ENCODE measurements at regions of chr11 and their contacts with region 1.

Region 1: DNA sequence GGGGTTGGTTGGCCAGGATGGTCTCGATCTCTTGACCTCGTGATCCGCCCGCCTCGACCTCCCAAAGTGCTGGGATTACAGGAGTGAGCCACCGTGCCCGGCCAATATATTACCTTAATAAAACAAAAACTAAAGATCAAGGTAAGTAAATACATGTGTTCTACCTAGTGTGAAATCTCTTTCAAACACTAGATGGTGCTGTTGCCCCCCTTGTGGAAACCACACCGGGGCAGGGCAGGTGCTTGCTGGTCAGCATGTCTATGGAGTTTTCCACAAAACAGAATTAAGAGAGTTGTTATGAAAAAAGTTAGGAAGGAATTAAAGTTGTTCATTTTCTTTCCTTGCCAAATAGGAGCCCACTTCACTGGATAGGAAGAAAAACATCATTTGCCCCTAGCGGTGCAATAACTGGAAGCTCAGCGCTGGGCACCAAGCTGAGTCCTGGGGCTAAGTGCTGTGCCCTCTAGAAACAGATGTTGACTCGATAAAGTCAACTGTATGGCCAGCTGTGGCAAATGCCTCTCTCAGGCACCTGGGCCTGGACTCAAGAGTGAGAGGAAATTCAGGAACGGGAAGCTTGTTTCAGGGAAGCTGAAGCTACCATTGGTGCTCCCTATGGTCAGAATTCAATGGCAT is 6.3 kb upstream of the KCNJ5 start:
- DNase-seq: peak; percentile 56 to 66
- ATAC-seq: peak; percentile 83 to 92
- H3K4me3 ChIP-seq: no peak overlapping the region
- H3K27ac ChIP-seq: no peak overlapping the region
- H3K4me1 ChIP-seq: no peaks in the 10 kb centered on the region
- CTCF ChIP-seq: peak; percentile 65
- EP300 ChIP-seq: no peak
- POLR2A ChIP-seq: no peak
- RAD21 ChIP-seq: peak; percentile 86 to 93

Region 2: DNA sequence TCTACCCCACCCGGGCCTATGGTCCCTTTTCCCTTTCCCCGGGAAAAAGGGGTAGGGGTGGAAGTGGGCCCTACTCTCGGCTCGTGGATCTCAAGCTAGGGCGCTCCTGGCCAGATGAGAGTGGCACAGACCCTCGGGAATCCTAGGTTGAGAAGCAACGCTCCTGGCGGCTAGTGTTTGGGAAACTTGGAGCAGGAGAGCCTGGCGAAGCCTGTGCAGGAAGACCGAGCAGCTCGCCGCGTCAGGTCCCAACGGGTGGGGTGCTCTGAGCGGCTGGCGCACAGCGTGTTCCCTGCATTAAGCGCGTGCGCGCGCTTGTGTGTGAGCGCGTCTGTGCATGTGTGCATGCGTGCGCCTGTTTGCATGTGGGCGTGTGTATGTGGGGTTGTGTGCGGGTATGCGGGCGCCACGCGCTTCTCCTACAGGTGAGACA is 198.1 kb before region 1 on chr11:
- CTCF ChIA-PET with region 1: no interaction called
- POLR2A ChIA-PET with region 1: no interaction called
- DNase-seq: peak in 1 of 2 experiments; percentile 15
- ATAC-seq: peak in 1 of 2 experiments; percentile 63; a peak in 3 of 6 replicates
- H3K4me3 ChIP-seq: no peak overlapping the region
- H3K27ac ChIP-seq: no peak overlapping the region
- H3K4me1 ChIP-seq: no peaks in the 10 kb centered on the region
- CTCF ChIP-seq: no peak
- EP300 ChIP-seq: no peak
- POLR2A ChIP-seq: no peak
- RAD21 ChIP-seq: no peak

Region 3: GRCh38 chr11:128868841-128869580 is 15.8 kb before region 1 on chr11:
- CTCF ChIA-PET with region 1: interaction called, 20 read pairs
- POLR2A ChIA-PET with region 1: no interaction called
- DNase-seq: no peak
- ATAC-seq: no peak
- H3K4me3 ChIP-seq: no peak overlapping the region
- H3K27ac ChIP-seq: no peak overlapping the region
- H3K4me1 ChIP-seq: no peaks in the 10 kb centered on the region
- CTCF ChIP-seq: no peak
- EP300 ChIP-seq: no peak
- POLR2A ChIP-seq: no peak
- RAD21 ChIP-seq: no peak

Region 4: DNA sequence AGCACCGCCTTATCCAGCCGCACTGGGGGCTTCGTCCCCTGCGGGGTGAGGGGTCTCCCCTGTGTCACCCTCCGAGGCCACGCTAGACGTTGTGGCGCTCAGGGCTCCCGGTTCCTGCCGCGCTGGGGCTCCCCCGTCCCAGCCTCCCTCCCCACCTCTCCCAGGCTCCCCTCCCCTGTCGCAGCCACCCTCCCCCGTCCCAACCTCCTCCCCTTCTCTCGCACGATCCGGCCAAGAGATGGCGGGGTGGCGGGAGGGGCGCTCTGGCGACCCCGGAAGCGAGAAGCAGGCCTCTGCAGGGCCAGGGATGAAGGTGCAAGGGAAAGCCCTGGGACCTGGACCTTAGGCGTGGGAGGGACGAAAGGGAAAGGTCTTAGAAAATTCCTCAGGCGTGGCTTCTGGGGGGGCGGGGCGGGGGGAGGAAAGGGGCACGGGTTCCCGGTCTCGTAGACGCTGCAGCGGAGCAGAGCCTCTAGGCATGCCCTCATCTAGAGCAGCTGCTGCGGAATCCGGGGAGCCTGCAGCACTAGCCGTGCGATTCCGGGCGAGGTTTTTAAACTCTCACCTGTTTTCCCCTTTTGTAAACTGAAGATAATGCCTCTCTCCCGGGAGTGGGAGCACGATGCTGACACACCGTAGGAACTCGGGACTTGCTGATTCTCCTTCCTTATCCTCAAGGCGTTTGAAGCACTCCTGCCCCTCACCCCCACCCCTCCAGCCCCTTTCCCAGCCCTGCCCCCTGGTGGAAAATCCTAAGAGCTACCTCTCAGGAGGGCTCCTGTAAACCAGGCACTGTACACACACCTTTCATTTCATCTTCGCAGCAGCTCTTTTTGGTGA is 20.7 kb after region 1 on chr11:
- CTCF ChIA-PET with region 1: interaction called, 57 read pairs
- POLR2A ChIA-PET with region 1: interaction called, 3 read pairs
- DNase-seq: peak; percentile 70 to 80
- ATAC-seq: peak; percentile 84 to 91
- H3K4me3 ChIP-seq: peak overlapping the region; percentile 64
- H3K27ac ChIP-seq: peak overlapping the region; percentile 84 to 99
- H3K4me1 ChIP-seq: peaks cover 15% of the 10 kb centered on the region
- CTCF ChIP-seq: peak; percentile 52
- EP300 ChIP-seq: no peak
- POLR2A ChIP-seq: peak; percentile 36; the same call in 1 of the 2 replicates
- RAD21 ChIP-seq: peak in 1 of 2 experiments; percentile 40; a peak in 3 of 5 replicates

Region 5: GRCh38 chr11:128936606-128937251 is 51.9 kb after region 1 on chr11:
- CTCF ChIA-PET with region 1: interaction called, 13 read pairs
- POLR2A ChIA-PET with region 1: no interaction called
- DNase-seq: no peak
- ATAC-seq: no peak
- H3K4me3 ChIP-seq: no peak overlapping the region
- H3K27ac ChIP-seq: no peak overlapping the region
- H3K4me1 ChIP-seq: no peaks in the 10 kb centered on the region
- CTCF ChIP-seq: no peak
- EP300 ChIP-seq: no peak
- POLR2A ChIP-seq: no peak
- RAD21 ChIP-seq: no peak

Region 6: GRCh38 chr11:128956401-128957201 is 71.8 kb after region 1 on chr11:
- CTCF ChIA-PET with region 1: interaction called, 123 read pairs
- POLR2A ChIA-PET with region 1: no interaction called
- DNase-seq: peak; percentile 62 to 76
- ATAC-seq: peak; percentile 95 to 96
- H3K4me3 ChIP-seq: no peak overlapping the region
- H3K27ac ChIP-seq: no peak overlapping the region
- H3K4me1 ChIP-seq: no peaks in the 10 kb centered on the region
- CTCF ChIP-seq: peak; percentile 65
- EP300 ChIP-seq: no peak
- POLR2A ChIP-seq: no peak
- RAD21 ChIP-seq: peak; percentile 79 to 84